HEK293 (cell line): ENCODE measurements at regions of chr12 and their contacts with region 1.

Region 1: DNA sequence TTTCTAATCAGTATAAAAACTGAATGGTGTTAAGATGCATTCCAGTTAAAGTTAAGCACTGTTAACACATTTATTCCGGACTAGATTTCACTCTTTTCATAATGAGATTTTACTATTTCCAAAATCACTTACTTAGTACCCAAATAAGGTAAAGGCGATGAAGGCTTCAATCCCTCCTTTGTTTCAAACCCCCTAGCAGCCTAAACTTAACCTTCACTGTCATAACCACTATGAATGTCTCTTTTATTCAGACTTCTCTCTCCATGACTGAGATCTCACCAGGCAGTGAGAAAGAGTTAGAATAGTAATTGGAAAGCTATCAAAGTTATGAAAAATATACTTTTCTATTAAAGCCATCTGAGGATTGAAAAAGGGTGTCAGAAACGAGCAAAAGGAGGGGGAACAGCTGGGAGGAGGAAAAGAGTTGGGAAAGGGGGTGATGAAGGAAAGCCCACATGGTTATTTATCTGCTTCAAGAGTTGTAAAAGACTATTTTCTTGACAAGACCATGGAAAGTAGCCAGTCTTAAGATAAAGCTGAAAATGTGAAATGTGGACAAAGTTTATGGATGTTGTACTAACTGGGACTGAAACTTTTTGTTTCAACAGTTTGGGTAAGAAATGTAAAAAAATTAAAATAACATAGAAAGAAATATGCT is 11.7 kb downstream of the EPS8 start:
- H3K4me3 ChIP-seq: no peak overlapping the region
- H3K27ac ChIP-seq: no peak overlapping the region
- H3K4me1 ChIP-seq: peaks cover 12% of the 10 kb centered on the region; the same call in 1 of the 2 replicates
- CTCF ChIP-seq: no peak

Region 2: GRCh38 chr12:15472036-15472435 is 305.4 kb before region 1 on chr12:
- CTCF ChIA-PET with region 1: no interaction called
- POLR2A ChIA-PET with region 1: no interaction called
- H3K4me3 ChIP-seq: no peak overlapping the region
- H3K27ac ChIP-seq: no peak overlapping the region
- H3K4me1 ChIP-seq: no peaks in the 10 kb centered on the region
- CTCF ChIP-seq: no peak

Region 3: DNA sequence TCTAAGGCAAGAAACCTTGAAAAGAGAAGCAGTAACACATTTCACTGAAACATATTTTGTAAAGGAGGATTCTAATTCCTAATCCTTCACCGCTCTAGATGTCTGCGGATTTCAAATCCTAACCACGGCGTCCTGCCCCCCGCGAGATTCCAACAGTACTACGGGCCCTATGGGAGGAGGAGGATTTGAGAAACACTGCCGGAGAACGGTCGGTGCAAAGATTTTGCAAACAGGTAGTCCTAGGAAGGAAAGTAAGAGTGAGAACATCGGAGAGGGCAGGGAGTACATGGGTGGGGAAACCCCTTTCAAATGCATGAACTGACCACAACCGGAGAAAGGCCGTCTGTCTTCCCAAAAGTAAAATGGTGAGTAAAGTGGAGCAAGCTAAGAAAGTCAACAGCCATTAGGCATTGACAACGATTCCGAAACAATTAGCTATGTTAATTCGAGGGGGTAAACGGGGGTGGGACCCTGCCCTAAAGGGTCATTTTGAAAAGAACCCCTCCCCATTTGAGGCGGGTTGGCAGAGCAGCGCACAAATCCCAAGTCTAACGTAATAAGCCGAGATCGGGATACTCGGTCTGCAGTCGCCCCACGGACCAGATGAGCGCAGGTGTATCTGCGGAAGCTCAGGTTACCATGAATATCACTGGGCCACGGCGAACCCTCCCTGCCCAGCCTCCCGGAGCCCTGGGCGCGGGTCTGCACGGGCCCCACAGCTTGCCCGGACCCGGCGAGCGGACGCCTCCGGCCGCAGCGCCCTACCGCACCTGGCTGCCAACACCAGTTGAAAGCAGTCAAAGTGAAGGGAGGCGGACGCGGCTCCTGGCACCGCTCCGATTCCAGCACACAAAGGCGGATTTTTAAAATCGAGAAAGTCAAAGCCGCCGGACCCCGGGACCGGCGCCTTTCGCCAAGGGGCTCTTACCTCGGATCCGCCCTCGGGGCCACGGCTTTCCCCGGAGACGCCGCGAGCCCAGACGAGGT is 11.0 kb after region 1 on chr12:
- CTCF ChIA-PET with region 1: interaction called, 11 read pairs
- POLR2A ChIA-PET with region 1: no interaction called
- H3K4me3 ChIP-seq: peak overlapping the region; percentile 76
- H3K27ac ChIP-seq: peak overlapping the region; percentile 93
- H3K4me1 ChIP-seq: peaks cover 10% of the 10 kb centered on the region
- CTCF ChIP-seq: no peak